GM10248 (cell line): ENCODE measurements at regions of chr14 and their contacts with region 1.

Region 1: GRCh38 chr14:73472185-73473114 is 14.1 kb upstream of the NUMB start:
- DNase-seq: peak; percentile 67
- CTCF ChIP-seq: peak; percentile 60

Region 2: DNA sequence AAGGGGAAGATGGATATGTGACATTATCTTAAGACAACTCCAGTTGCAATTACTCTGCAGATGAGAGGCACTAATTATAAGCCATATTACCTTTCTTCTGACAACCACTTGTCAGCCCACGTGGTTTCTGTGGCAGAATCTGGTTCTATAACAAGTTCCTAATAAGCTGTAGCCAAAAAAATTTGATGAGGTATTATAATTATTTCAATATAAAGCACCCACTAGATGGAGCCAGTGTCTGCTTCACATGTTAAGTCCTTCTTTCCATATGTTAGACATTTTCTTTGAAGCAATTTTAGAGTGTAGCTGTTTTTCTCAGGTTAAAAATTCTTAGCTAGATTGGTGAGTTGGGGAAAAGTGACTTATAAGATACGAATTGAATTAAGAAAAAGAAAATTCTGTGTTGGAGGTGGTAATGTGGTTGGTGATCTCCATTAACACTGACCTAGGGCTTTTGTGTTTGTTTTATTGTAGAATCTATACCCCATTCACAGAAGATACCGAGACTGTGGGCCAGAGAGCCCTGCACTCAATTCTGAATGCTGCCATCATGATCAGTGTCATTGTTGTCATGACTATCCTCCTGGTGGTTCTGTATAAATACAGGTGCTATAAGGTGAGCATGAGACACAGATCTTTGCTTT is 299.2 kb before region 1 on chr14:
- CTCF ChIA-PET with region 1: interaction called, 33 read pairs
- POLR2A ChIA-PET with region 1: no interaction called
- DNase-seq: peak; percentile 31
- CTCF ChIP-seq: peak; percentile 49

Region 3: GRCh38 chr14:73223049-73223448 is 249.4 kb before region 1 on chr14:
- CTCF ChIA-PET with region 1: interaction called, 11 read pairs
- POLR2A ChIA-PET with region 1: no interaction called
- DNase-seq: no peak
- CTCF ChIP-seq: peak; percentile 8

Region 4: GRCh38 chr14:73231981-73232851 is 240.2 kb before region 1 on chr14:
- CTCF ChIA-PET with region 1: interaction called, 36 read pairs
- POLR2A ChIA-PET with region 1: no interaction called
- DNase-seq: peak; percentile 57
- CTCF ChIP-seq: peak; percentile 58

Region 5: GRCh38 chr14:73644531-73645247 is 172.2 kb after region 1 on chr14 and contains the start of gene DNAL1:
- CTCF ChIA-PET with region 1: no interaction called
- POLR2A ChIA-PET with region 1: no interaction called
- DNase-seq: peak; percentile 99
- CTCF ChIP-seq: no peak